Activated B cell treated with CpG ODN at 0.5 μM for 24 hours (primary cell): ENCODE measurements at regions of chr7 and their contacts with region 1.

Region 1: GRCh38 chr7:91636129-91636724 is 244.3 kb downstream of the MTERF1 start:
- DNase-seq: no peak
- ATAC-seq: no peak
- H3K4me3 Mint-ChIP-seq: no peak overlapping the region
- H3K27ac Mint-ChIP-seq: no peak overlapping the region
- H3K4me1 Mint-ChIP-seq: no peaks in the 10 kb centered on the region
- H3K27me3 Mint-ChIP-seq: no peaks in the 10 kb centered on the region
- CTCF ChIP-seq: no peak

Region 2: GRCh38 chr7:90455163-90456030 is 1180.8 kb before region 1 on chr7:
- CTCF ChIA-PET with region 1: interaction called, 3 read pairs
- POLR2A ChIA-PET with region 1: no interaction called
- intact Hi-C with region 1: loop called (anchors 2 kb)
- DNase-seq: no peak
- ATAC-seq: peak; percentile 73
- H3K4me3 Mint-ChIP-seq: peak overlapping the region; percentile 46
- H3K27ac Mint-ChIP-seq: no peak overlapping the region
- H3K4me1 Mint-ChIP-seq: peaks cover 8% of the 10 kb centered on the region
- H3K27me3 Mint-ChIP-seq: peaks cover 6% of the 10 kb centered on the region
- CTCF ChIP-seq: peak; percentile 64

Region 3: DNA sequence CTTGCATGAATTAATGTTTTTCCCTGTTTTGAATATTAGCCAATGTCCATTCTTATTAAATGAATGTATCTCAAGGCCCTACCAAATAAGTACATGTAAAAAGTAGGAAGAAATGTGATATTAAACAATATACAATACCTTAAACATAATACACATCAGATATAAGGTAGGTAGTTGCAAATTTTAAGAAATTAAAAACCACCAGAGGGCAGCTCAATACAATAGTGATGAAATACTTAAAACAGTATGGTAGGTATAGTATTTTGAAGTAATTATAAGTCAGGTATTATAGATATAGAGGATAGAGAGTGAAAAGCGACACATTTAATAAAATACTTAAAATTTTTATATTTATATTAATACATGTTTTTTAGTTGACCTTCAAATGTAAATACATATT is 1083.7 kb before region 1 on chr7:
- CTCF ChIA-PET with region 1: no interaction called
- POLR2A ChIA-PET with region 1: no interaction called
- intact Hi-C with region 1: loop called (anchors 5 kb)
- DNase-seq: no peak
- ATAC-seq: peak; percentile 34
- H3K4me3 Mint-ChIP-seq: no peak overlapping the region
- H3K27ac Mint-ChIP-seq: no peak overlapping the region
- H3K4me1 Mint-ChIP-seq: peaks cover 3% of the 10 kb centered on the region
- H3K27me3 Mint-ChIP-seq: peaks cover 3% of the 10 kb centered on the region
- CTCF ChIP-seq: no peak

Region 4: GRCh38 chr7:90629297-90629918 is 1006.8 kb before region 1 on chr7:
- CTCF ChIA-PET with region 1: no interaction called
- POLR2A ChIA-PET with region 1: no interaction called
- intact Hi-C with region 1: loop called (anchors 2 kb)
- DNase-seq: no peak
- ATAC-seq: peak; percentile 86
- H3K4me3 Mint-ChIP-seq: no peak overlapping the region
- H3K27ac Mint-ChIP-seq: peak overlapping the region; percentile 19
- H3K4me1 Mint-ChIP-seq: peaks cover 16% of the 10 kb centered on the region
- H3K27me3 Mint-ChIP-seq: no peaks in the 10 kb centered on the region
- CTCF ChIP-seq: peak; percentile 68

Region 5: GRCh38 chr7:90690159-90690858 is 945.9 kb before region 1 on chr7:
- CTCF ChIA-PET with region 1: no interaction called
- POLR2A ChIA-PET with region 1: no interaction called
- intact Hi-C with region 1: loop called (anchors 5 kb)
- DNase-seq: no peak
- ATAC-seq: peak; percentile 65
- H3K4me3 Mint-ChIP-seq: no peak overlapping the region
- H3K27ac Mint-ChIP-seq: no peak overlapping the region
- H3K4me1 Mint-ChIP-seq: peaks cover 44% of the 10 kb centered on the region
- H3K27me3 Mint-ChIP-seq: no peaks in the 10 kb centered on the region
- CTCF ChIP-seq: no peak

Region 6: GRCh38 chr7:91089382-91089963 is 546.8 kb before region 1 on chr7:
- CTCF ChIA-PET with region 1: interaction called, 3 read pairs
- POLR2A ChIA-PET with region 1: no interaction called
- intact Hi-C with region 1: loop called (anchors 1 kb)
- DNase-seq: no peak
- ATAC-seq: peak; percentile 58
- H3K4me3 Mint-ChIP-seq: peak overlapping the region; percentile 19
- H3K27ac Mint-ChIP-seq: no peak overlapping the region
- H3K4me1 Mint-ChIP-seq: peaks cover 6% of the 10 kb centered on the region
- H3K27me3 Mint-ChIP-seq: no peaks in the 10 kb centered on the region
- CTCF ChIP-seq: peak; percentile 92

Region 7: DNA sequence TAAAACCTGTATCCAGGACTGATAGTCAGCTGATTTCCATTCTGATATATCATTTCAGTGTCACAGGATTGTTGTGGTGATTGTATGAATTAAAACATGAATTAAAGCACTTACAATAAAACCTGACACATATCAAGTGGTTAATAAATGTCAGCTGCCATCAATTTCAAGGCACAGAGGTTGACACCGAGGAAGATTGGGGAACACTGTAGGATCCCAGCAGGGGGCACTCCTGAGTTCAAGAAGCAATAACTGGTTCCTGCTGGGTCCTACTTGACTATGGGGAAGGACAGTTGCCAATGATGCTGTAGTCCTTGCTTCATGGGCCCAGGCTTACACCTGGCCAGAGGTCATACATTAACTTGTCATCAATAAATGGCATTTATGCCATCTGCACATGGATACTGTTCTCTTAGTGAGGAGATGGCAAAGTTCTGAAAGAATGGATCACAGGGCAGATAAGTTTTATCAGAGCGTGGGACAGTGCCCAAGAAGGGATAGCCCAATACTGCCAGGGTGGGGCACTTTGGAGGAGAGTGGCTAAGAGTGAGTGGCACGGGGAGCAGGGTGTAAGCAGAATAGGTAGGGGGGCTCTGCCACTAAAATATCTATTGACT is 347.9 kb before region 1 on chr7:
- CTCF ChIA-PET with region 1: no interaction called
- POLR2A ChIA-PET with region 1: no interaction called
- intact Hi-C with region 1: loop called (anchors 1 kb)
- DNase-seq: no peak
- ATAC-seq: no peak
- H3K4me3 Mint-ChIP-seq: no peak overlapping the region
- H3K27ac Mint-ChIP-seq: no peak overlapping the region
- H3K4me1 Mint-ChIP-seq: no peaks in the 10 kb centered on the region
- H3K27me3 Mint-ChIP-seq: peaks cover 15% of the 10 kb centered on the region
- CTCF ChIP-seq: no peak